ENCODE measurements at regions of chr2 and their contacts with region 1.

Region 1: GRCh38 chr2:42086500-42086953 is 38.7 kb downstream of the PKDCC start:
- DNase-seq: peak; percentile 52
- H3K4me3 ChIP-seq: no peak overlapping the region
- H3K27ac ChIP-seq: no peak overlapping the region
- H3K4me1 ChIP-seq: no peaks in the 10 kb centered on the region
- CTCF ChIP-seq: peak; percentile 88

Region 2: DNA sequence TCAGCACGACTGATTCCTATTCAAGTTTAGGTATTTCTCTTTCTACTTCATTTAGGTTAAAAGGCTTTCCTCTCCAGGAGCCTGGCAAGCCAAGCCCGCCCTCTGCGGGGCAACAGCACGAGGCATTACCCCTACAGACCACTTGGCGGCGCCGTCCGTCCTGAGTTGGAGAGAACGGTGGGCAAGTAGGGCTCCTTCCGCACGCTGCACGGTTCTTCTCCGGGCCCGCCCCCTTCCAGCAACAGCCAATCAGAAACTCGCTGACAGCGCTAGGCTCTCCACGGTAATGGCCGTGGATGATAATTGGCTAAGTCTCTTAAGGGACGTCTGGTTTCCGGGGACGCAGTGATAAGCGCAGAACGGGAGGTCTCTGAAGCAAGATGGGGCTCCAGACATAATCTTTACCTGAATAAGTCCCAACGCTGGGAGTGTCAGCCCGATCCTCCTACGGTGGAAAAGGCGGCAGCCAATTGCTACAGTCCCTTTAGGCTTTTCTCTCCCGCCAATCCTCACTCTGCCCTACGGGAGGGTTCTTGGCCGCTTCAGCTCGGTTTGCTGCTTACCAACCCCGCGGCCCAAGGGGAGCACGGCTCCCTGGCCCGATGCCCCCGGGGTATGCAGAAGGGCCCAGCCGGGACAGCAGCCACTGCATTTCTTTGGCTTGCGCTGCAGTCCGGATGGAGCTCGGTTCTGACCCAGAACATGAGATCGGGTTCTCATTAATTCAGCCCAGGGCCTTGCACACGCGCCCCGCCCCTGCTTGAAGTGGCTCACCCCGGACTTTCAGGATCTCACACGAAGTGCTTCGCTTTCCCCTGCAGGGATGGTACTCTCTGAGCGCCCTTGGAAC is 245.6 kb before region 1 on chr2:
- CTCF ChIA-PET with region 1: no interaction called
- POLR2A ChIA-PET with region 1: no interaction called
- intact Hi-C with region 1: loop called (anchors 1 kb)
- DNase-seq: peak; percentile 92
- H3K4me3 ChIP-seq: peak overlapping the region; percentile 67
- H3K27ac ChIP-seq: no peak overlapping the region
- H3K4me1 ChIP-seq: peaks cover 4% of the 10 kb centered on the region
- CTCF ChIP-seq: peak; percentile 93

Region 3: GRCh38 chr2:41869542-41870264 is 216.8 kb before region 1 on chr2:
- CTCF ChIA-PET with region 1: interaction called, 11 read pairs
- POLR2A ChIA-PET with region 1: interaction called, 4 read pairs
- intact Hi-C with region 1: loop called (anchors 1 kb)
- DNase-seq: peak; percentile 57
- H3K4me3 ChIP-seq: no peak overlapping the region
- H3K27ac ChIP-seq: no peak overlapping the region
- H3K4me1 ChIP-seq: no peaks in the 10 kb centered on the region
- CTCF ChIP-seq: peak; percentile 81

Measured in OCI-LY7 (cell line).